ENCODE measurements at regions of chr5 and their contacts with region 1.

Region 1: DNA sequence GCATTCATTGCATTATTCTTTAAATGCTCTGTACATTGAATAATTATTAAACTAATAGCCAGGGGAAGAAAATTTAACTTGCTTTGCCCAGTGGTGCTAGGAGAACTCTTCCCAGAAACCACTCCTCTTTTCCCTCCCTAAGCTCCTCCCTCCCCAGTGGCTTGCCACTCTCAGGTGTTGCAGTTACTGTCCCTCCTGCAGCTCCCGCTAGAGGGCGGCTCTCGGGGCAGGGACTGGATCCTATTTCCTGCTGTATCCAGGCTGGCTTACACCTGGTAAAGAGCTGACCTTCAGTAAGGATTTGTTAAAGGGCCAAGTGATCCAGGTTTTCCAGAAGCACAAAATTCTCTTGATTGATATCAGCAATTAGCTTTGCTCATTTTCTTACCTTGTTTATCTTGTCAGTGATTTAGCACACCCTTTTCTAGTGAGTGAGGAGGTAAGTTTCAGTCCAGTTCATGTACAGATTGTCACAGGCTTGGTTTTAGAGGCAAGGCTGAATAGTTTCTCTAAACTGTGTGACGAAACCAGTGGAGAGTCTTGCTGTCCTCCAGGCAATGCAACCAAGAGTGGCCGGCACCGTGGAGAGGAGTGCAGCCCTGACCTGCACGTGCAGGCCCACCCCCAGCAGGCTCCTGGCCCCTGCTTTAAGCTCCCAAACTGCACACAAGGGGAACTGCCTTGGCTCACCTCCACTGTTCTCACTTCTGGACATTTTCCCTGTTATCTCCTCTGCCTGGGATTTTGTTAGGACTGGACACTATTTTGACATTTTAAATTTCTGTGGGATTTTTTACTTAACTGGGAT is 423.8 kb downstream of the SPOCK1 start:
- DNase-seq: no peak
- H3K4me3 ChIP-seq: no peak overlapping the region
- H3K27me3 ChIP-seq: no peaks in the 10 kb centered on the region
- CTCF ChIP-seq: peak; percentile 70

Region 2: GRCh38 chr5:136141561-136141960 is 933.8 kb before region 1 on chr5:
- CTCF ChIA-PET with region 1: no interaction called
- POLR2A ChIA-PET with region 1: no interaction called
- DNase-seq: no peak
- H3K4me3 ChIP-seq: no peak overlapping the region
- H3K27me3 ChIP-seq: no peaks in the 10 kb centered on the region
- CTCF ChIP-seq: no peak

Region 3: DNA sequence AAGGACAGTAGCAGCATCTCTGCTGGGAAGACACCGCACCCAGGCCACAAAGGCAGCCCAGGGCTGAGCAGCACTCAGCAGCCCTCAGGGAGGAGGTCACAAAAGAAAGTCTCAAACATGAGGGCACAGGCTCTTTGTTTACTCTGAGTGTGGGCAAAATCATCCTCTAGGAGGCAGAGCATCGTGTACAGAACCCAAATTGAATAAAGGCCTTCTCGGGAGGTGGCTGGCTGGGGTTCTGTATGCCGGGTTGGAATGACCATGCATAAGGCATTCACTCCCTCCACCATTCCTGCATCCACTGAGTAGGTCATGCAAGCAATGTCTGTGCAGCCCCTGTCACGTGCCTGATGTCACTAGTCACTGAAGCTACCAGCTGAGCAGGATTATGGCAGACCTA is 11.0 kb after region 1 on chr5:
- CTCF ChIA-PET with region 1: interaction called, 24 read pairs
- POLR2A ChIA-PET with region 1: interaction called, 6 read pairs
- DNase-seq: no peak
- H3K4me3 ChIP-seq: no peak overlapping the region
- H3K27me3 ChIP-seq: no peaks in the 10 kb centered on the region
- CTCF ChIP-seq: no peak

Region 4: DNA sequence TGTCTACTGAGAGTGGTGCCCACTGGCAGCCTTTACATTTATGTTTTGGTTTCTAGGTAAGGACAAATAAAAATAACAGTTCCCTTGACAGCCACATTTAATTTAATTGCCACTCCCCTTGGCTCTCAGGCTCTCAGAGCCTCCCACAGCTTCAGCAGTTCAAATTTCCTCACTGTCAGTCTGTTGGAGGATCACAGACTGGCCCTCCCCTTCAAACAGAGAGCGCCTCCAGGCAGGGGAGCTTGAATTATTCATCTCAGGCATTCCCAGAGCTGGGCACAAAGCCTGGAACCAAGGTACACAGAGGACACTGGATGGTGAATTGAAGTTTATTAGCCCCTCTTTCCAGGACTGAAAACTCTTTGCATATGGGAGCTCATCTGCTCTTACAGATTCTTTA is 16.1 kb after region 1 on chr5:
- CTCF ChIA-PET with region 1: interaction called, 24 read pairs
- POLR2A ChIA-PET with region 1: no interaction called
- DNase-seq: no peak
- H3K4me3 ChIP-seq: no peak overlapping the region
- H3K27me3 ChIP-seq: no peaks in the 10 kb centered on the region
- CTCF ChIP-seq: no peak

Region 5: GRCh38 chr5:137114529-137114928 is 39.2 kb after region 1 on chr5:
- CTCF ChIA-PET with region 1: no interaction called
- POLR2A ChIA-PET with region 1: no interaction called
- DNase-seq: peak; percentile 28
- H3K4me3 ChIP-seq: no peak overlapping the region
- H3K27me3 ChIP-seq: no peaks in the 10 kb centered on the region
- CTCF ChIP-seq: no peak

Measured in BJ (cell line).